SK-N-SH (cell line): ENCODE measurements at regions of chr1 and their contacts with region 1.

Region 1: DNA sequence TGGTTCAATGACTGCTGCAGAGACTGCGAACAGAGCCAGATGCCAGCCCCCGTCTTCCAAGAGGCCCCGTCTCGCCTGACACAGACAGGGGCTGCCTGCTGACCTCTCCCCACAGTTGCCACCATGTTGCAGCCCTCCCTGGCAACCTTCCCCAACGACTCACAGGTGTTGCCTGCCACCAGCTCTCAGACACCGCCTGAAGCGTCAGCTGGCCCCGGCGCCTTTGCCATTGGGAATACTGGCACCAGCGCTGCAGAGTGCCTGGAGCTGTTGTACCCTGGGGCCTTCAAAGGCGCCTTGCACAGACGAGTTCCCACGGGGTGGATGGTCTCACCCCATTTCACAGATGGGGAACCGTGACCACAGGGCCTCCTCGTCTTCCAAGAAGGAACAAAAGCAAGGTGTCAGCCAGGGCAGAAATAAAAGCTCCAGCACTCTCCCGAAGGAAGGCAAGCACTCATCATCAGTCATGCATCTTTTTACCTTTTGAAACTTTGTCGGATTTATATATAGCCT is 167.0 kb downstream of the ADSS2 start:
- DNase-seq: no peak
- H3K4me3 ChIP-seq: no peak overlapping the region
- H3K27ac ChIP-seq: no peak overlapping the region
- H3K4me1 ChIP-seq: no peaks in the 10 kb centered on the region
- H3K27me3 ChIP-seq: no peaks in the 10 kb centered on the region
- CTCF ChIP-seq: no peak
- EP300 ChIP-seq: no peak
- RAD21 ChIP-seq: no peak

Region 2: GRCh38 chr1:244302889-244303613 is 18.4 kb after region 1 on chr1:
- CTCF ChIA-PET with region 1: interaction called, 45 read pairs
- POLR2A ChIA-PET with region 1: no interaction called
- DNase-seq: no peak
- H3K4me3 ChIP-seq: no peak overlapping the region
- H3K27ac ChIP-seq: no peak overlapping the region
- H3K4me1 ChIP-seq: peaks cover 0 to 4% of the 10 kb centered on the region in 2 experiments; a peak in 1 of 4 replicates
- H3K27me3 ChIP-seq: no peaks in the 10 kb centered on the region
- CTCF ChIP-seq: no peak
- EP300 ChIP-seq: no peak
- RAD21 ChIP-seq: no peak

Region 3: GRCh38 chr1:244314921-244315559 is 30.3 kb after region 1 on chr1:
- CTCF ChIA-PET with region 1: no interaction called
- POLR2A ChIA-PET with region 1: no interaction called
- DNase-seq: no peak
- H3K4me3 ChIP-seq: no peak overlapping the region
- H3K27ac ChIP-seq: no peak overlapping the region
- H3K4me1 ChIP-seq: 0 out of 4 replicates have a peak, but pooled peaks cover 0 to 12% of the 10 kb centered on the region in 2 experiments
- H3K27me3 ChIP-seq: no peaks in the 10 kb centered on the region
- CTCF ChIP-seq: no peak
- EP300 ChIP-seq: no peak
- RAD21 ChIP-seq: no peak

Region 4: DNA sequence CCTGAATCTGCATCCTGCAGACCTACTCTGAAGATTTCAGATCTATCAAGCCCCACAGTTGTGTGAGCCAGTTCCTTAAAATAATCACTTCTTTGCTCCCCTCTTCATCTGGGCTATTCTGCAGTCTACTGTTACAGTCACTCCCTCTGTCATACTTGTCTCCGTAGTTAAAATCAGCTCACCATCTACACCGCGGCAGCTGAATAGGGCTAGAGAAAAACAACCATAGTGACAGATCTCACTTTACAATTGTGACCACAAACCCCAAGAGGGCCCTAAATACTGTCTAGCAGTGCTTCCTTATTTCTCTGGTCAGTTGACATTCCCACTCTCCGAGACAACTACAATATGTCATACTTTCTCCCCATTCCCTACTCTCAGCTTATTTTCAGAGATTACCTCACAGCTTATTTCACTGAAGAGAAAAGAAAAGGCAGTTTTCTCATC is 381.1 kb after region 1 on chr1:
- CTCF ChIA-PET with region 1: no interaction called
- POLR2A ChIA-PET with region 1: no interaction called
- DNase-seq: no peak
- H3K4me3 ChIP-seq: no peak overlapping the region
- H3K27ac ChIP-seq: no peak overlapping the region
- H3K4me1 ChIP-seq: no peaks in the 10 kb centered on the region; a peak in 1 of 4 replicates
- H3K27me3 ChIP-seq: no peaks in the 10 kb centered on the region
- CTCF ChIP-seq: no peak
- EP300 ChIP-seq: no peak
- RAD21 ChIP-seq: no peak